Activated CD4-positive, alpha-beta T cell treated with anti-CD3 and anti-CD28 coated beads, Interleukin-2, amount 10 ng/mL, durations not matched to agents 24 days and 14 days (primary cell): ENCODE measurements at regions of chr1 and their contacts with region 1.

Region 1: GRCh38 chr1:157490467-157491165 is 61.7 kb downstream of the FCRL5 start:
- DNase-seq: peak; percentile 88
- H3K4me3 Mint-ChIP-seq: no peak overlapping the region
- H3K27ac Mint-ChIP-seq: no peak overlapping the region
- H3K4me1 Mint-ChIP-seq: no peaks in the 10 kb centered on the region
- H3K27me3 Mint-ChIP-seq: peaks cover 30% of the 10 kb centered on the region

Region 2: GRCh38 chr1:157193702-157194391 is 296.8 kb before region 1 on chr1:
- intact Hi-C with region 1: loop called (anchors 5 kb)
- DNase-seq: peak; percentile 87
- H3K4me3 Mint-ChIP-seq: no peak overlapping the region
- H3K27ac Mint-ChIP-seq: no peak overlapping the region
- H3K4me1 Mint-ChIP-seq: peaks cover 3% of the 10 kb centered on the region
- H3K27me3 Mint-ChIP-seq: peaks cover 39% of the 10 kb centered on the region

Region 3: GRCh38 chr1:157369808-157370521 is 120.7 kb before region 1 on chr1:
- intact Hi-C with region 1: loop called (anchors 1 kb)
- DNase-seq: peak; percentile 84
- H3K4me3 Mint-ChIP-seq: no peak overlapping the region
- H3K27ac Mint-ChIP-seq: no peak overlapping the region
- H3K4me1 Mint-ChIP-seq: no peaks in the 10 kb centered on the region
- H3K27me3 Mint-ChIP-seq: peaks cover 13% of the 10 kb centered on the region

Region 4: GRCh38 chr1:157390651-157391050 is 100.0 kb before region 1 on chr1:
- intact Hi-C with region 1: no loop called
- DNase-seq: no peak
- H3K4me3 Mint-ChIP-seq: no peak overlapping the region
- H3K27ac Mint-ChIP-seq: no peak overlapping the region
- H3K4me1 Mint-ChIP-seq: no peaks in the 10 kb centered on the region
- H3K27me3 Mint-ChIP-seq: peaks cover 25% of the 10 kb centered on the region